Mammary epithelial cell (primary cell): ENCODE measurements at regions of chr13 and their contacts with region 1.

Region 1: GRCh38 chr13:89695343-89696257 is 1651.9 kb upstream of the MIR17HG start:
- DNase-seq: peak; percentile 44
- H3K4me3 ChIP-seq: no peak overlapping the region
- H3K27ac ChIP-seq: no peak overlapping the region
- H3K4me1 ChIP-seq: no peaks in the 10 kb centered on the region
- H3K27me3 ChIP-seq: no peaks in the 10 kb centered on the region
- CTCF ChIP-seq: peak; percentile 88

Region 2: DNA sequence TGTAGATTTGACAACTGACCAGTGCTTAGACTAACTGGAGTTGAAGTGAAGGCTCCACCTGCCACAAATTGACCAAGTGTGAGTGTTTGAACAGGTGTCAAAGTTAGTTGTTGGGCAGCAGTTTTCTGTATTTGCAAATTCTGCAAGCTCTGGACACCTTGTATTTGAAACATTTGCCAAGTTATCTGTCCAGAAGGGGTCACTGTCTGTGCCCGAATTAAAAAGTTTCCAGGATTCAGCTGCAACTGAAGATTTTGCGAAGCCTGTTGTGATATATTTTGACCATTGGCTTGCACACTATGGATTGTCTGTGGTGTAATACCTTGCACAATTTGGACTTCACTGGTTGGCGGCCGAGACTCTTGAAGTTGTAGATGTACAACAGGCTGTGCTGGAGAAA is 333.7 kb before region 1 on chr13:
- CTCF ChIA-PET with region 1: no interaction called
- dilution Hi-C with region 1: no loop called
- in situ Hi-C with region 1: no loop called
- intact Hi-C with region 1: loop called (anchors 2 kb)
- DNase-seq: peak; percentile 4
- H3K4me3 ChIP-seq: no peak overlapping the region
- H3K27ac ChIP-seq: no peak overlapping the region
- H3K4me1 ChIP-seq: no peaks in the 10 kb centered on the region
- H3K27me3 ChIP-seq: no peaks in the 10 kb centered on the region
- CTCF ChIP-seq: peak; percentile 21 to 40

Region 3: GRCh38 chr13:89432997-89433396 is 262.6 kb before region 1 on chr13:
- CTCF ChIA-PET with region 1: interaction called, 16 read pairs
- dilution Hi-C with region 1: no loop called
- in situ Hi-C with region 1: loop called (anchors 10 kb)
- intact Hi-C with region 1: loop called (anchors 1 kb)
- DNase-seq: no peak
- H3K4me3 ChIP-seq: no peak overlapping the region
- H3K27ac ChIP-seq: no peak overlapping the region
- H3K4me1 ChIP-seq: no peaks in the 10 kb centered on the region
- H3K27me3 ChIP-seq: no peaks in the 10 kb centered on the region
- CTCF ChIP-seq: no peak

Region 4: DNA sequence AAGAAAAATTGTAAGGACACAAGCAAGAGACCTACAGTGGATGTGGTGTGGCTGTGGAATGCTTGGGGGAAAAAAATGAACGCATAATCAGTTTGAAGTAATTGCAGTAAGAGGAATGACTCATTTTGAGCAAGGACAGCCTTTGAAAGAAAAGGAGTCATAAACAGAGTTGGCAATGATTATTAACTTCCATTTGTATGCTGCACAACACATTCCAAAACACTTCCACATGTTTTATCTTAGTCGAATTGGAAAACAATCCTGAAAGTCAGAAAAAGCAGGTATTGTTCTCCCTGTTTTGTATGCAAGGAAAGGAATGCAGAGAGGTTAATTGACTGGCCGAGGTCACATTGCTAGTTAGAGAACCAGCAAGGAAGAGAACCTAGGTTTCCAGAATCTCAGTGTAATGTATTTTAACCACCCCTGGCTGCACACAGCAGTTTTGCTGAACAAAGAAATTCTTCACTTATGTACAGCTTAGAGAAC is 1021.9 kb after region 1 on chr13:
- CTCF ChIA-PET with region 1: no interaction called
- dilution Hi-C with region 1: no loop called
- in situ Hi-C with region 1: no loop called
- intact Hi-C with region 1: no loop called
- DNase-seq: peak; percentile 76
- H3K4me3 ChIP-seq: no peak overlapping the region
- H3K27ac ChIP-seq: no peak overlapping the region
- H3K4me1 ChIP-seq: peaks cover 15% of the 10 kb centered on the region
- H3K27me3 ChIP-seq: no peaks in the 10 kb centered on the region
- CTCF ChIP-seq: no peak